ENCODE measurements at regions of chr11 and their contacts with region 1.

Region 1: GRCh38 chr11:95715777-95716241 is 73.8 kb downstream of the FAM76B start:
- DNase-seq: peak; percentile 94
- ATAC-seq: peak; percentile 80
- H3K4me3 ChIP-seq: peak overlapping the region in 4 of 5 experiments; percentile 16 to 55 (median 28)
- H3K4me3 Mint-ChIP-seq: peak overlapping the region; percentile 68
- H3K27ac ChIP-seq: peak overlapping the region; percentile 94 to 98
- H3K27ac Mint-ChIP-seq: peak overlapping the region; percentile 92
- H3K4me1 ChIP-seq: peaks cover 80 to 84% of the 10 kb centered on the region in 2 donors
- H3K4me1 Mint-ChIP-seq: peaks cover 85% of the 10 kb centered on the region
- H3K27me3 ChIP-seq: no peaks in the 10 kb centered on the region
- H3K27me3 Mint-ChIP-seq: no peaks in the 10 kb centered on the region
- CTCF ChIP-seq: no peak

Region 2: GRCh38 chr11:94973099-94973968 is 742.5 kb before region 1 on chr11 and contains the starts of genes CWC15 and KDM4D:
- CTCF ChIA-PET with region 1: no interaction called
- POLR2A ChIA-PET with region 1: no interaction called
- intact Hi-C with region 1: loop called (anchors 10 kb)
- DNase-seq: peak; percentile 94
- ATAC-seq: peak; percentile 100
- H3K4me3 ChIP-seq: peak within 1 kb of the TSS; percentile 75 to 97 (median 87)
- H3K4me3 Mint-ChIP-seq: peak within 1 kb of the TSS; percentile 92
- H3K27ac ChIP-seq: peak within 1 kb of the TSS; percentile 74 to 83
- H3K27ac Mint-ChIP-seq: peak within 1 kb of the TSS; percentile 94
- H3K4me1 ChIP-seq: peaks cover 10 to 14% of the 10 kb centered on the region in 2 donors
- H3K4me1 Mint-ChIP-seq: peaks cover 13% of the 10 kb centered on the region
- H3K27me3 ChIP-seq: no peaks in the 10 kb centered on the region
- H3K27me3 Mint-ChIP-seq: no peaks in the 10 kb centered on the region
- CTCF ChIP-seq: no peak
- total RNA-seq, gene CWC15: 59.5 and 59.8 TPM in 2 replicates
- total RNA-seq, gene KDM4D: 0.44 and 0.73 TPM in 2 replicates

Region 3: GRCh38 chr11:95095858-95096587 is 619.8 kb before region 1 on chr11:
- CTCF ChIA-PET with region 1: no interaction called
- POLR2A ChIA-PET with region 1: no interaction called
- intact Hi-C with region 1: loop called (anchors 1 kb)
- DNase-seq: peak; percentile 54
- ATAC-seq: peak; percentile 86
- H3K4me3 ChIP-seq: peak overlapping the region in 1 of 5 experiments; percentile 0
- H3K4me3 Mint-ChIP-seq: peak overlapping the region; percentile 44
- H3K27ac ChIP-seq: peak overlapping the region; percentile 31 to 54
- H3K27ac Mint-ChIP-seq: peak overlapping the region; percentile 76
- H3K4me1 ChIP-seq: peaks cover 71 to 73% of the 10 kb centered on the region in 2 donors
- H3K4me1 Mint-ChIP-seq: peaks cover 86% of the 10 kb centered on the region
- H3K27me3 ChIP-seq: no peaks in the 10 kb centered on the region
- H3K27me3 Mint-ChIP-seq: no peaks in the 10 kb centered on the region
- CTCF ChIP-seq: no peak

Region 4: GRCh38 chr11:95692526-95693260 is 23.1 kb before region 1 on chr11:
- CTCF ChIA-PET with region 1: interaction called, 4 read pairs
- POLR2A ChIA-PET with region 1: no interaction called
- intact Hi-C with region 1: loop called (anchors 2 kb)
- DNase-seq: peak; percentile 33
- ATAC-seq: peak; percentile 59
- H3K4me3 ChIP-seq: peak overlapping the region in 1 of 5 experiments; percentile 21
- H3K4me3 Mint-ChIP-seq: no peak overlapping the region
- H3K27ac ChIP-seq: no peak overlapping the region
- H3K27ac Mint-ChIP-seq: no peak overlapping the region
- H3K4me1 ChIP-seq: peaks cover 31 to 33% of the 10 kb centered on the region in 2 donors
- H3K4me1 Mint-ChIP-seq: peaks cover 22% of the 10 kb centered on the region
- H3K27me3 ChIP-seq: no peaks in the 10 kb centered on the region
- H3K27me3 Mint-ChIP-seq: no peaks in the 10 kb centered on the region
- CTCF ChIP-seq: no peak

Region 5: GRCh38 chr11:95734009-95734572 is 18.3 kb after region 1 on chr11:
- CTCF ChIA-PET with region 1: interaction called, 12 read pairs
- POLR2A ChIA-PET with region 1: no interaction called
- intact Hi-C with region 1: loop called (anchors 2 kb)
- DNase-seq: no peak
- ATAC-seq: no peak
- H3K4me3 ChIP-seq: no peak overlapping the region
- H3K4me3 Mint-ChIP-seq: peak overlapping the region; percentile 42
- H3K27ac ChIP-seq: no peak overlapping the region
- H3K27ac Mint-ChIP-seq: no peak overlapping the region
- H3K4me1 ChIP-seq: peaks cover 8 to 12% of the 10 kb centered on the region in 2 donors
- H3K4me1 Mint-ChIP-seq: peaks cover 25% of the 10 kb centered on the region
- H3K27me3 ChIP-seq: no peaks in the 10 kb centered on the region
- H3K27me3 Mint-ChIP-seq: no peaks in the 10 kb centered on the region
- CTCF ChIP-seq: no peak

Region 6: GRCh38 chr11:95764267-95764898 is 48.6 kb after region 1 on chr11:
- CTCF ChIA-PET with region 1: interaction called, 135 read pairs
- POLR2A ChIA-PET with region 1: interaction called, 10 read pairs
- intact Hi-C with region 1: loop called (anchors 1 kb)
- DNase-seq: peak; percentile 78
- ATAC-seq: peak; percentile 92
- H3K4me3 ChIP-seq: no peak overlapping the region
- H3K4me3 Mint-ChIP-seq: no peak overlapping the region
- H3K27ac ChIP-seq: no peak overlapping the region
- H3K27ac Mint-ChIP-seq: no peak overlapping the region
- H3K4me1 ChIP-seq: peaks cover 7% of the 10 kb centered on the region in 2 donors
- H3K4me1 Mint-ChIP-seq: peaks cover 24% of the 10 kb centered on the region
- H3K27me3 ChIP-seq: no peaks in the 10 kb centered on the region
- H3K27me3 Mint-ChIP-seq: no peaks in the 10 kb centered on the region
- CTCF ChIP-seq: peak; percentile 92

Region 7: DNA sequence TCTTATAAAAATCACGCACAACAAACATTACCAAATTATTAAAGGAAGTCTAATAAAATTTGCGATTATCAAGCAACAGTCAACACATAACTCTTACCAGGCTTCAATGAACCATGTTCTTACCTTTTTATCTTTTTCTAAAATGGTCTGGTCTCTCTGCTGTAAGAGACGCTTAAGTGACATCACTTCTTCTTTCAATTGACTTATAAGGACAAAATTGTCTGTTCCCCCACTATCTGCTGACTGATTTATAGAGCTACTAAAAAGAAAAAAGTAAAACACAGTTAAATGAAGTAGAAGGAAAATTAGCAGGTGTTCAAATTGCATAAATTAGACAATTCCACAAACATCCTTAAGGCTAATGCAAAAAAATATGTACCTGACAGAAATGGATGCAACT is 62.9 kb after region 1 on chr11:
- CTCF ChIA-PET with region 1: no interaction called
- POLR2A ChIA-PET with region 1: no interaction called
- intact Hi-C with region 1: no loop called
- DNase-seq: peak; percentile 26
- ATAC-seq: no peak
- H3K4me3 ChIP-seq: no peak overlapping the region
- H3K4me3 Mint-ChIP-seq: no peak overlapping the region
- H3K27ac ChIP-seq: peak overlapping the region in 1 of 2 donors; percentile 1
- H3K27ac Mint-ChIP-seq: no peak overlapping the region
- H3K4me1 ChIP-seq: peaks cover 0 to 10% of the 10 kb centered on the region in 2 donors
- H3K4me1 Mint-ChIP-seq: peaks cover 32% of the 10 kb centered on the region
- H3K27me3 ChIP-seq: no peaks in the 10 kb centered on the region
- H3K27me3 Mint-ChIP-seq: no peaks in the 10 kb centered on the region
- CTCF ChIP-seq: no peak

Region 8: DNA sequence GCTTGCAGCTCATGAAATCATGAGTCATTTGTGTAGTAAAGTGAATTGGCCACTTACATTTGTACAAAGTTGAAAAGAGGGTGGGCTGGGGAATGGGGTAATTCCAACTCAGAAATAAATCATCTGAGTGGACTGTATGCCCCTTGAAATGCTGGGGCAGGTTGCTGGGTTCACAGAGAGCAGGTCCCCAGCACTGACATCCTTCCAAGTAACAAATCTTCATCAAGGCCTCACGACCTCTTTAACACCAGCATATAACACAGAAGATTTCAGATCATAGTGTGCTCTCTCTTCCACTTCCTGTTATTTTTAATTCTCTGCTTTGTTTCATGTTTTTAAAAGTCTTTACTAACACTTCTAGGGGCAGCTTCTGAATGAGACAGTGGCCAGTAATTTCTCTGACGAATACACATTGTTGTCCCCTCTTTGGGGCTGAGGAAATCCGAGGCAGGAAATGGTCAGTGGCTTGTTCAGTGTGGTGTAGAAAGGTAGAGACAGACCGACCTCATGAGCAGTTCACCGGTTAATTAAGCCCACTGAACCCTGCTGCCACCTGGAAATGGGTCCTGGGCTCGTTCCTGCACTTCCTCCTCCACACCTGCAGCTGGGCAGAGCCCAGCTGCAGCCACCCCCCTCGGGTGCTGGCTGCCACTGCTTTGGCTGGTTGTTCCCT is 499.4 kb after region 1 on chr11:
- CTCF ChIA-PET with region 1: no interaction called
- POLR2A ChIA-PET with region 1: no interaction called
- intact Hi-C with region 1: loop called (anchors 5 kb)
- DNase-seq: peak; percentile 83
- ATAC-seq: peak; percentile 86
- H3K4me3 ChIP-seq: peak overlapping the region in 3 of 5 experiments; percentile 15 to 37 (median 16)
- H3K4me3 Mint-ChIP-seq: peak overlapping the region; percentile 77
- H3K27ac ChIP-seq: peak overlapping the region; percentile 72 to 84
- H3K27ac Mint-ChIP-seq: peak overlapping the region; percentile 98
- H3K4me1 ChIP-seq: peaks cover 78 to 84% of the 10 kb centered on the region in 2 donors
- H3K4me1 Mint-ChIP-seq: peaks cover 80% of the 10 kb centered on the region
- H3K27me3 ChIP-seq: no peaks in the 10 kb centered on the region
- H3K27me3 Mint-ChIP-seq: no peaks in the 10 kb centered on the region
- CTCF ChIP-seq: no peak